Mammary epithelial cell (primary cell): ENCODE measurements at regions of chr17 and their contacts with region 1.

Region 1: DNA sequence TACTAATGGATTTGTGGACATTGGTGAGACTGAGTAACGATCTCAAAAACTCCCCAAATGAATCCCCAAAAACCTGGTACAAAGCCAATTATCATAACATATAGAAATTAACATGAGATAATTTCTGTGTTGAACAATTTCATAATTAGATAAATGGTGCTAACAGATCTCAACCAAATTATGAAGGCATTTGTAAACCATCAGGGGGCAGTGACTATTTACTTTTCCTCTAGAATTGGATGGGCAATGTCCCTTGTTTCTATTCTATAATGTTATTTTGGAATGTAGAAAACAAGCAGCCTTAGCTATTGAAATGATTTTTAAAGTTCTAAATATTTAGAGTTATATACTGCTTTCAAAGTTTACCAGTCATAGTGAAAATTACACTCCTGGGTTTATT is 57.8 kb downstream of the MYH10 start:
- DNase-seq: no peak
- H3K4me3 ChIP-seq: no peak overlapping the region
- H3K27ac ChIP-seq: no peak overlapping the region
- H3K4me1 ChIP-seq: no peaks in the 10 kb centered on the region
- H3K27me3 ChIP-seq: no peaks in the 10 kb centered on the region
- CTCF ChIP-seq: peak; percentile 3 to 39

Region 2: DNA sequence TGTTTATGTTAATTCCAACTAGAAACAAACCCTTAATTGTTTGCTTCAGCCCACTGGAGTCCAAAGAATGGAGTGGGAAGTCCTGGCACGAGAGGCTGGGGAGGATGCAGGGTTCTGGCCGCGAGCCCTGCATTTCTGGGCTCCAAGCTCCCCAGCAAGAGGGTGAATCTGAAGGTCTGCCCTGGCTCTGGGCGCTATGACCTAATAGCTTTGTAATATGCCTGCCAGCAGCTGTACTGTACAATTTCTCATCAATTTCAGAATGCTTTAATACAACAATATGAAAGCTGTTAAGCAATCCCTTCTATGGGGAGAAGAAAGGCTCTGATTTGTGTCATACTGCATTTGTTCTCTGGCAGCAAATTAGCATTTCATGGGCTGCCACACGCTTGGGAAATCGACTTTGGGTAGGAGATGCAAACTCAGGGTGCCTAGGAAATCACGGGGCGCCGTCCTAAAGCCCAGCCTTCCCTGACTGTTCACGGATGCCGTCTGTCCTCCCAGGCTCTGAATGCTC is 93.3 kb before region 1 on chr17:
- CTCF ChIA-PET with region 1: no interaction called
- dilution Hi-C with region 1: no loop called
- in situ Hi-C with region 1: no loop called
- intact Hi-C with region 1: no loop called
- DNase-seq: peak; percentile 19
- H3K4me3 ChIP-seq: no peak overlapping the region
- H3K27ac ChIP-seq: no peak overlapping the region
- H3K4me1 ChIP-seq: peaks cover 22% of the 10 kb centered on the region
- H3K27me3 ChIP-seq: no peaks in the 10 kb centered on the region
- CTCF ChIP-seq: no peak

Region 3: GRCh38 chr17:8506145-8506544 is 66.6 kb before region 1 on chr17:
- CTCF ChIA-PET with region 1: no interaction called
- dilution Hi-C with region 1: no loop called
- in situ Hi-C with region 1: no loop called
- intact Hi-C with region 1: no loop called
- DNase-seq: no peak
- H3K4me3 ChIP-seq: no peak overlapping the region
- H3K27ac ChIP-seq: no peak overlapping the region
- H3K4me1 ChIP-seq: no peaks in the 10 kb centered on the region
- H3K27me3 ChIP-seq: no peaks in the 10 kb centered on the region
- CTCF ChIP-seq: no peak

Region 4: DNA sequence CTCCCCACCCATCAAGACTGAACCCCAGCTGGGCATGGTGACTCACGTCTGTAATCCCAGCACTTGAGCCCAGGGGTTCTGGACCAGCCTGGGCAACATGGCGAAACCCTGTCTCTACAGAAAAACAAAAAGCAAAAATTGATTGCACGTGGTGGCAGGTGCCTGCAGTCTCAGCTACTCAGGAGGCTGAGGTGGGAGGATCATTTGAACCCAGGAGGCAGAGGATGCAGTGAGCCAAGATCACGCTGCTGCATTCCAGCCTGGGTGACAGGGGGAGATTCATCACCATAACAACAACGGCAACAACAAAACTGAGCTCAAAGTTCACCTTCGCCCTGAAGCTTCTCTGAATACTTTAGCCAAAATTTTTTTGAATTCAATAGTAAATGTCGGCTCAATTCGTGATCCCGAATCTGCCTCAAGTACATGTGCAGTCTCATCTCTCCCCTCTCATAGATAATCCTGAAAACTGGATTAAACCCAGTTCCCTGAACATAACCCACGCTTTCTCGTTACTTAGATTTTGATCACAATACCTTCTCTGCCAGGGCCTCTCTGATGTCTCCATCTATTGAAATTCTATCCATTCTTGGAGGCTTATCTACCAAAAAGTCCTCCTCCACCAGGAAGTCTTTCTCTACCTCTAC is 71.2 kb after region 1 on chr17:
- CTCF ChIA-PET with region 1: no interaction called
- dilution Hi-C with region 1: loop called (anchors 5 kb)
- in situ Hi-C with region 1: no loop called
- intact Hi-C with region 1: no loop called
- DNase-seq: no peak
- H3K4me3 ChIP-seq: no peak overlapping the region
- H3K27ac ChIP-seq: no peak overlapping the region
- H3K4me1 ChIP-seq: no peaks in the 10 kb centered on the region
- H3K27me3 ChIP-seq: peaks cover 3% of the 10 kb centered on the region
- CTCF ChIP-seq: no peak

Region 5: GRCh38 chr17:8692913-8693727 is 120.4 kb after region 1 on chr17:
- CTCF ChIA-PET with region 1: no interaction called
- dilution Hi-C with region 1: no loop called
- in situ Hi-C with region 1: no loop called
- intact Hi-C with region 1: no loop called
- DNase-seq: no peak
- H3K4me3 ChIP-seq: no peak overlapping the region
- H3K27ac ChIP-seq: no peak overlapping the region
- H3K4me1 ChIP-seq: no peaks in the 10 kb centered on the region
- H3K27me3 ChIP-seq: no peaks in the 10 kb centered on the region
- CTCF ChIP-seq: no peak

Region 6: DNA sequence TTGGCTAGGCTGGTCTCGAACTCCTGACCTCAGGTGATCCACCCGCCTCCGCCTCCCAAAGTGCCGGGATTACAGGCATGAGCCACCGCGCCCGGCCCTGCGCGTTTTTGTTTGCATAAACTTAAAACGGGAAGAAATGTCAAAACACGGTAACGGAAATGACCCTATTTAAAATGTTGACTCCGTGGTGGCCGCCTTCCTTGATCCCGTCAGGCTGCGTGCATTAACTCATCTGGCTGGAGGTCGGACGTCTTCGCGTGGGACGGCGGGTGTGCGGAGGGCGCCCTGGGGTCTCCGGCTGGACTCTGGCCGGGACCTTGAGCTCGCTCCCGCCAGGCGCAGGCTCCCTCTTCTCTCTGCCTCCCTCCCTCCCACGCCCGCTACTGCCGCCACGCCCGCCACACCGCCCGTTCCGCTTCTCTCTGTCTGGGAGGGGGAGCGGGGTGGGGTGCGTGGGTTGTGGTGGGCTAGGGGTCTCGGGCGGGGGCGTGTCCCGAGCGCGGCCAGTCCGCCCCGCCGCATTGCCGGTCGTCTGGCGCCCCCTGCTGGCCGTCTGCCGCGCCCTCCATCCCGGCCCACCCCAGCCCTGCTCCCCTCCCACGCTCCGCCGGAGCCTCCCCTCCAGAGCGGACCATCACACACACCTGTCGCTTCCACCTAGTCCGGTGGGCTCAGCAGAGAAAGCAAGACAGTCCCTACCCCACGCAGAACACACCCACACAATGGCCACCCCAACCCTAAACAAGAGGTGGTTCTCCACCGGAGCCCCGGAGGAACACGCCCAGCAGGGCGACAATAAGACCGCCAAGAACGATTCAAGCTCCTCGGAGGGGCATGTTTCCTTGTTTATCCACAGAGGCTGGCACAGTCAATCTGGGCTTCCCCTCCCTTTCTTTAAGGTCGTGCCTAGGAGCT is 173.1 kb after region 1 on chr17:
- CTCF ChIA-PET with region 1: no interaction called
- dilution Hi-C with region 1: no loop called
- in situ Hi-C with region 1: no loop called
- intact Hi-C with region 1: loop called (anchors 1 kb)
- DNase-seq: peak; percentile 22
- H3K4me3 ChIP-seq: peak overlapping the region; percentile 47 to 65 (median 56)
- H3K27ac ChIP-seq: no peak overlapping the region
- H3K4me1 ChIP-seq: peaks cover 5% of the 10 kb centered on the region
- H3K27me3 ChIP-seq: no peaks in the 10 kb centered on the region
- CTCF ChIP-seq: peak; percentile 25 to 82

Region 7: DNA sequence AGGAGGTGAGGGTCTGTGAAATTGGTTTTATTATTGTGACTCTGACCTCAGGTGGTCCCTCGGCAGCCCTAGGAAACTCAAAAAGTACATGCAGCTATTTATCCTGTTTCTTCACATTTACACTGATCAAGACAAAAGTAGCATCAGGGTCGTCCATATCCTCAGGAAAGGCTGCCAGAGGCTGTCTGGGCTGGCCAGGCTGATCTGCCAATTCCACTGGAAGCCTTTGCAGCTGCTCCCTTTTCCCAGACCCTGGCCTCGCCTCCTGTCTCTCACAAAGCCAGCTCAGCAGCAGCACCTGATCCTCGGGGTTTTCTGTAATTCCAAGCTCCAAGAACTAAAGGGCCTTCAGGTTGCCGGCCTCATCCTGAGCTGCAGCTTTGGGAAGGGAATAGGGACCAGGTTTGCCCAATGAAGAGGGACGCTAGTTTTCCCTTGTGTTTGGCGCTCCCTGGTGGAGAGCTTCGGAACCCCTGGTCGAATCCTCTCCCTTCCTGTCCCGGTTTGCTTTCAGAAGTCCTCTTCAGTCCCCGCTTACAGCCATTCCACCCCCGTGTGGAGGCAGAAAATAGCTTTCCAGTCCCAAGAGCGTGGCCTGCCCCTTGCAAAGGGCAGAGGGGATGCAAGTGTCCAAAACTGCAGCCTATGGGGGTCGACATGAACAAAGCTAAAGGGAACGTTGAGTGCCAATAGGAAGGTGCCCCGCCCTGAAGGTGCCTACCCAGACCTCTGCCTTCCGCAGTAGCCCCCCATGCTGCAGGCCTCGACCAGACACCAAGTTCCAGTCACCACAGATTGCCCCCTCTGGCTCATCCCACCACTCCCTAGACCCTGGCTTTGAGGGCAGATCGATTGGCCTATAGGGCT is 213.0 kb after region 1 on chr17:
- CTCF ChIA-PET with region 1: interaction called, 3 read pairs
- dilution Hi-C with region 1: no loop called
- in situ Hi-C with region 1: no loop called
- intact Hi-C with region 1: loop called (anchors 5 kb)
- DNase-seq: peak; percentile 45
- H3K4me3 ChIP-seq: no peak overlapping the region
- H3K27ac ChIP-seq: no peak overlapping the region
- H3K4me1 ChIP-seq: no peaks in the 10 kb centered on the region
- H3K27me3 ChIP-seq: no peaks in the 10 kb centered on the region
- CTCF ChIP-seq: peak; percentile 83 to 89